ENCODE measurements at regions of chr2 and their contacts with region 1.

Region 1: GRCh38 chr2:192162392-192163042 is 32.2 kb downstream of the TMEFF2 start:
- DNase-seq: peak; percentile 78
- H3K4me3 ChIP-seq: 0 out of 2 replicates have a peak overlapping the region, but pooled peaks have one; percentile 28
- H3K27ac ChIP-seq: no peak overlapping the region
- H3K4me1 ChIP-seq: peaks cover 9% of the 10 kb centered on the region; the same call in 1 of the 2 replicates
- H3K27me3 ChIP-seq: no peaks in the 10 kb centered on the region

Region 2: GRCh38 chr2:191280304-191280703 is 882.2 kb before region 1 on chr2:
- in situ Hi-C with region 1: no loop called
- DNase-seq: no peak
- H3K4me3 ChIP-seq: no peak overlapping the region
- H3K27ac ChIP-seq: no peak overlapping the region
- H3K4me1 ChIP-seq: peaks cover 19% of the 10 kb centered on the region
- H3K27me3 ChIP-seq: no peaks in the 10 kb centered on the region

Region 3: GRCh38 chr2:191560411-191560980 is 602.0 kb before region 1 on chr2:
- in situ Hi-C with region 1: loop called (anchors 5 kb)
- DNase-seq: no peak
- H3K4me3 ChIP-seq: no peak overlapping the region
- H3K27ac ChIP-seq: no peak overlapping the region
- H3K4me1 ChIP-seq: peaks cover under 1% of the 10 kb centered on the region; the same call in 1 of the 2 replicates
- H3K27me3 ChIP-seq: no peaks in the 10 kb centered on the region

Region 4: GRCh38 chr2:191677646-191678436 is 484.7 kb before region 1 on chr2 and contains the start of gene NABP1:
- in situ Hi-C with region 1: loop called (anchors 25 kb)
- DNase-seq: peak; percentile 99
- H3K4me3 ChIP-seq: peak within 1 kb of the TSS; percentile 97
- H3K27ac ChIP-seq: peak within 1 kb of the TSS; percentile 100
- H3K4me1 ChIP-seq: peaks cover 35% of the 10 kb centered on the region
- H3K27me3 ChIP-seq: no peaks in the 10 kb centered on the region
- total RNA-seq, gene NABP1: 121 and 124 TPM in 2 replicates

Measured in GM23248 (cell line).